Posterior cingulate gyrus (tissue), 11 donors: ENCODE measurements at regions of chr9 and their contacts with region 1.

Region 1: DNA sequence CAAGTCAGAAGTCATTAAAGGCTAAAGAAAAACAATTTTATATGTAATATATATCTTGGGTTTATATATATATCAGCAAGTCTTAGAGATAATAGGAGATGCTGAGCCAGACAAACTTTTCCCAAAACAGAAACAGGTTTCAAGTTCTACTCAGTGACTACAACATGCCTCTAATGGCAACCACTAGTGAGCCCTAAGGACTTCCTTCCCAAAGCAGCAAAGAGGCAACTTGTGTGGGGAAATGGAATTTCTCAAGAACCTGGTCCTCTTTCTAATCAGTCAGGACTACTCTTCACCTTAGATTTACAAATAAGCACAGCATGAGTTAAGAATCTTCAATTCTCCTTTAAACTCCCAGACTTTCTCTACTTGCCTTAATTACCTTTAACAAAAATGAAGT is 17.6 kb downstream of the RNF38 start:
- DNase-seq: no peak

Region 2: DNA sequence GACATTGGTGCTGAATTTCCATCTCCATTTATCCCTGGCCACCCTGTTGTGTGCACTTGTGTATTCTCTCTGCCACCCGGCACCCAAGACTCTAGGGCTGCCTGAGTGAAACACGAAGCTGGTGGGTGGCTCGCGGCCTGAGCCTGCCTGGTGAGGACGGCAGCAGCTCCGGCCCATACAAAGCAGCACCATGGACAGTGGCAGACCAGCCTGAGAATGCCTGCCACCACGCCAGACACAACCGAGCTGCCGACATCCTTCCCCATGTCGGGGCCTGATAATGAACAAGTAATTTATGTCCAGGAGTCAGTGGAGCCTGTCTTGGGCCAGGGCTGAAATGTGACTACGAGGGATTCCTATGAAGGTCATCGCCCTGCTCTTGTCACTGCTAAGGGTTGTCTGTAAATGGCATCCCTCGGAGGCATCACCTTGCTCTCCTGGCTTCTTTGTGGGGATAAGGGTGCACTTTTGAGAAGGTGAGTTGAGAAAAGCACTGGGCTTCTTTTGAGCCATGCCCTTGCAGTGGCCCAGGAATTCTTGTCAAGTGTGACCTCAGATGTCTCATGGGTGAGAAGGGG is 365.9 kb after region 1 on chr9:
- intact Hi-C with region 1: loop called (anchors 10 kb)
- DNase-seq: peak in 1 of 10 donors; percentile 60